Transverse colon (tissue), 4 donors: ENCODE measurements at regions of chr15 and their contacts with region 1.

Region 1: DNA sequence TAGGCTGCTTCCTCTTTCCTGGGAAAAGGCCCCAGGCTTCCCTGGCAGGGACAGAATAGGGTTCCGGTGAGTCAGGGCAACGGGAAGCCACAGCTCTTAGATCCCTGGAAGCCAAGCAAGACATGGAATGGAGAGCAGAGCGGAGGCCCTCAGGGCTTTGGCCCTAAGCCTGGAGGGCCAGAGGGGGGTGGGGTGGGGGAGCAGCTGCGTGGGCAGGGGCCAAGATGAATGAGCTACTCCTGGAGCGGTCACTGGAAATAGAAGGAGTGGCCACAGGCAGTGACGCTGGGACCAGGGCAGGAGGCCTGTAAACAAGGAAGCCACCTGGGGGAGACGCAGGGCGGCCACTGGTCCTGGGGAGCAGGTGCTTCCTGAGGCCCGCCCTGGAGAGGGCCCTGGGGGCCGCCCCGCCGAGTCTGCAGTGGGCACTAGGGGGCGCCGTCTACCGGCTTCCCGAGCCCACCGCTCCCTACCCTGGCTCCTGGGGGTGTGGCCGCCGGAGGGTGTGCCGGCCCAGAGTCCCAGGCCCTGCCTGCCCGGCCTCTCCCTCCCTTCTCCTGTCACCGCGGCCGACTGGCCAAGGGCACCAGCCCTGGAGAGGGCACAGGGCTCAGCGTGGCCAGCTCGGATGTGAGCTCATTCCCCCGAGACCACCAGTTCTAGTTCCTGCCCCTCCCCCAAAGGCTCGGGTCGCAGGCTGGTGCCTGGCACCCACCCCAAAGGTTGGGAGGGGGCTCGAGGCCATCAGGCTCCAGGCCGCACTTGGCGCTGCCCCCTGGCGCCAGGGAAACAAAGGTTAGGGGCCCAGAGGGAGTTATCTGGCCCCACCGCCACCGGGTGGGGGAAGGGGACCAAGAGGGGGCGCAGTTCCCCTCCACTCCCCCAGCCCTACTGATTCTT is 12.1 kb downstream of the VPS18 start:
- DNase-seq: peak; percentile 96
- H3K4me3 ChIP-seq: peak overlapping the region; percentile 12 to 52 (median 34)
- H3K27ac ChIP-seq: peak overlapping the region; percentile 89 to 97 (median 94)
- H3K4me1 ChIP-seq: peaks cover 24 to 57% (median 34%) of the 10 kb centered on the region in 4 donors
- H3K27me3 ChIP-seq: no peaks in the 10 kb centered on the region
- CTCF ChIP-seq: peak; percentile 87 to 97 (median 89)
- EP300 ChIP-seq: no peak
- POLR2A ChIP-seq: peak; percentile 83

Region 2: DNA sequence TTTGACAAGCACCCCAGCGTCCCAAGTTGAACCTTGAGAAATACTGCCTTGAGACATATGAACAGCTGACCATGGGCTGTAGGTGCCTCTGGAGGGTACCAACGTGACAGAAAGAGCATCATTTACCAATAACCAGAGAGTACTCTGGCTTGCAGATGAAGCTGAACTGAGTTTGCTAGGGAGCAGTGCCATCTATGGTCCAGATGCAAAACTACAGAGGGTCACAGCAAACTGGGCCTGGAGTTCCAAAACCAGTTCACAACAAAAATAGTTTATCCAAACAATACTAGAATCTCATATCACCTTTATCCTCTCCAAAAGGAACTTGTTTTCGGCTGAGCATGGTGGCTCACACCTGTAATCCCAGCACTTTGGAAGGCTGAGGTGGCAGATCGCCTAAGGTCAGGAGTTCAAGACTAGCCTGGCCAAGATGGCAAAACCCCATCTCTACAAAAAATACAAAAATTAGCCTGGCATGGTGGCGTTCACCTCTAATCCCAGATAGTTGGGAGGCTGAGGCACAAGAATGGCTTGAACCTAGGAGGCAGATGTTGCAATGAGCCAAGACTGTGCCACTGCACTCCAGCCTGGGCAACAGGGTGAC is 116.2 kb after region 1 on chr15:
- in situ Hi-C with region 1: loop called (anchors 10 to 25 kb)
- intact Hi-C with region 1: loop called (anchors 5 kb)
- DNase-seq: peak; percentile 20
- H3K4me3 ChIP-seq: no peak overlapping the region
- H3K27ac ChIP-seq: no peak overlapping the region
- H3K4me1 ChIP-seq: peaks cover 0 to 33% (median 9%) of the 10 kb centered on the region in 4 donors
- H3K27me3 ChIP-seq: no peaks in the 10 kb centered on the region
- CTCF ChIP-seq: peak; percentile 54 to 63 (median 60)
- EP300 ChIP-seq: no peak
- POLR2A ChIP-seq: no peak

Region 3: GRCh38 chr15:41180206-41180789 is 274.0 kb after region 1 on chr15:
- in situ Hi-C with region 1: loop called in 2 of 4 experiments (anchors 10 kb)
- intact Hi-C with region 1: loop called (anchors 5 kb)
- DNase-seq: no peak
- H3K4me3 ChIP-seq: no peak overlapping the region
- H3K27ac ChIP-seq: no peak overlapping the region
- H3K4me1 ChIP-seq: no peaks in the 10 kb centered on the region
- H3K27me3 ChIP-seq: no peaks in the 10 kb centered on the region
- CTCF ChIP-seq: no peak
- EP300 ChIP-seq: no peak
- POLR2A ChIP-seq: no peak

Region 4: DNA sequence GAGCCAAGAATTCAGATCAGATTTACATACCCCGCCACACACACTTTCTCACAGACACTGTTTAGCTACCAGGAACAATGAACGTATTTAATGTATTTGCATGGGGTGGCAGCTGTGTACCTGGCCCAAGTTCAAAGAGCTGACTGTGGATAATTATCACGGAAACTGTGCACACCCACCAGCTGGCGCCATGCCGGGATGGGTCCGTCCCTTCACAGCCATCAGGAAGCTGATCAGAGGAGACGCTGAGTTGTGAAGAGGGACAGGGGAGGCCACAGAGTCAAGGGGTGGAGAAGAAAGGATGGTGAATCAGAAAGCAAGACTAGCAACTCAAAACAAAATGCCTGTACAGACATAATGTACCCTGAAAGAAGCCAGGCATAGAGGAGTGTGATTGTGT is 1201.1 kb after region 1 on chr15:
- in situ Hi-C with region 1: no loop called
- intact Hi-C with region 1: no loop called
- DNase-seq: peak; percentile 92
- H3K4me3 ChIP-seq: no peak overlapping the region
- H3K27ac ChIP-seq: peak overlapping the region; percentile 13 to 46 (median 32)
- H3K4me1 ChIP-seq: peaks cover 7 to 32% (median 15%) of the 10 kb centered on the region in 4 donors
- H3K27me3 ChIP-seq: no peaks in the 10 kb centered on the region
- CTCF ChIP-seq: no peak
- EP300 ChIP-seq: no peak
- POLR2A ChIP-seq: peak; percentile 23